Mammary epithelial cell (primary cell): ENCODE measurements at regions of chr3 and their contacts with region 1.

Region 1: DNA sequence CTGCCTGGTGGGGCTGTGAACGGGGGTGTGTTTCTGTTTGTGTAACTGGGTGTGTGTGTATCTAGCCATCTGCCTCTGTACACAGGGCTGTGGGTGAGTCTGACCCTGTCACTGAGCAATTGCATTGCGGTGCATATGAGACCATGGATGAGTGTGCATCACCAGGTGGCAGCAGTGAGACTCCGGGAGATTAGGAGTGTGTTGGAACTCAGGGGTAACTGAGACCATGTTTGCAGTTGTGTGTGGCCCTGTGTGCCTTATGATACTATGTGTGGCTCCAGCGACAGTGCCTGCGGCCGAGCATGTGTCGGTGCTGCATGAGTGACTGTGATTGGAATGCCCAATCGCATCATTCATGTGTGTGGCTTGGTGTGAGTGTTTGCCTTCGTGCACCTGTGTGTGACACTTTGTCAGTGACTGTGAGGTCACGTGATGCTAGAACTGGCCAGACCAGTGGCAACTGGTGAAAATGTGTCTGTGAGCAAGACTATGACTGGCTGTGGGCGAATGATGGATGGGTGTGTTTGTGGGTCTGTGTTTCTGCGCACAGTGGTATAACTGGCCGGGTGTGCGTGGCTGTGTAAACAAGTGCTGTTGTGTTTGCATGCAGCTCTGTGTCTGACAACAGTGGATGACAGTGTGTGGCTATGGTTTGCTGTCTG is 14.0 kb downstream of the VILL start:
- DNase-seq: peak; percentile 70
- H3K4me3 ChIP-seq: no peak overlapping the region
- H3K27ac ChIP-seq: no peak overlapping the region
- H3K4me1 ChIP-seq: peaks cover 25% of the 10 kb centered on the region
- H3K27me3 ChIP-seq: no peaks in the 10 kb centered on the region
- CTCF ChIP-seq: peak; percentile 84 to 89

Region 2: GRCh38 chr3:37768107-37768809 is 236.3 kb before region 1 on chr3:
- CTCF ChIA-PET with region 1: no interaction called
- dilution Hi-C with region 1: no loop called
- in situ Hi-C with region 1: no loop called
- intact Hi-C with region 1: no loop called
- DNase-seq: no peak
- H3K4me3 ChIP-seq: no peak overlapping the region
- H3K27ac ChIP-seq: no peak overlapping the region
- H3K4me1 ChIP-seq: no peaks in the 10 kb centered on the region
- H3K27me3 ChIP-seq: peaks cover 2% of the 10 kb centered on the region
- CTCF ChIP-seq: no peak

Region 3: GRCh38 chr3:37967260-37967881 is 37.2 kb before region 1 on chr3:
- CTCF ChIA-PET with region 1: no interaction called
- dilution Hi-C with region 1: loop called (anchors 5 kb)
- in situ Hi-C with region 1: no loop called
- intact Hi-C with region 1: no loop called
- DNase-seq: peak; percentile 45
- H3K4me3 ChIP-seq: no peak overlapping the region
- H3K27ac ChIP-seq: no peak overlapping the region
- H3K4me1 ChIP-seq: no peaks in the 10 kb centered on the region
- H3K27me3 ChIP-seq: no peaks in the 10 kb centered on the region
- CTCF ChIP-seq: peak; percentile 78 to 90

Region 4: DNA sequence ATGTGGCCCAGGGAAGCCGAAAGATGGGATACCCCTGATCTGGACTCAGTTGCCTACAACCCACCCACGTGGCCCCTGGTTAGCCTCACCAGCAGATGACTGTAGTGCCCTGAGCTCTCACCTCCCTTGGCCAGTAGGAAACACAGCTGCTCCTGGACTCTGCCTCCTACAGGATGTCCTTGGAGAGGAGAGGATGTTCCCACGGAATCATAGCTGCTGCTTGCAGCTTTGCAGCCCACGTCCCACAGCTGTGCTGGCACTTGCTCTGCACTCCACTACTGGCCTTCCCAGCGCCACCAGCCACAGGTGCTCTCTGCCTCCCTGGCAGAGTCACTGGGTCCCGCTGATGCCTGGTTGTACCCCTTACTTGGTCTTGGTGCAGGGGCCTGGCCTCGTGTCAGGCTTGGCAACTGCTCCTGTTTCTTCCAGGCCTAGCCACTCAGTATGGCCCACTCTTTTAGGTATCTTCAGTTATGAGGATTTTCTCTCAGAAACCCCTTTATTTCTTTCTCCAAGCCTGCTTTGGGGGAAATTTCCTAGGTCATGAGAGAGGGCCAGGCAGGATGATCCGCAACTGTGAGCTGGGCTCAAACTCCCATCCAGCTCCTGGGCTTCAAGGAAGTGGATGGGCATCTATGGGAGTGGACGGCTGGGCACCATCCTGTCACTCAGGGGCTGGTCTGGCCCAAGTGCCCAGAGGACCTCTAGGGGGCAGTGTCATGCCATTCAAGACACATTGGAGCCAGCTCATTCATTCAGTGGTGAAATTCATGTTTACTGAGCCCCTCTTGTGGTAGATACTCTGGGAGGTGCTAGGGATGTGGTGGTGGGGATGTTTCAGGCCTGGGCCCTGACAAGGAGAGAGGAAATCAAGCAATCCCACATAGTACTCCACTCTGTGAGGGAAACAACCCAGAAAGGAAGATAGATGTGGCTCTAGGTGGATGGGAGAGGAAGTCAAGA is 30.1 kb before region 1 on chr3:
- CTCF ChIA-PET with region 1: interaction called, 3 read pairs
- dilution Hi-C with region 1: no loop called
- in situ Hi-C with region 1: no loop called
- intact Hi-C with region 1: loop called (anchors 1 kb)
- DNase-seq: peak; percentile 30
- H3K4me3 ChIP-seq: no peak overlapping the region
- H3K27ac ChIP-seq: no peak overlapping the region
- H3K4me1 ChIP-seq: no peaks in the 10 kb centered on the region
- H3K27me3 ChIP-seq: no peaks in the 10 kb centered on the region
- CTCF ChIP-seq: peak; percentile 70 to 76

Region 5: GRCh38 chr3:38247366-38248035 is 243.0 kb after region 1 on chr3:
- CTCF ChIA-PET with region 1: interaction called, 3 read pairs
- dilution Hi-C with region 1: no loop called
- in situ Hi-C with region 1: no loop called
- intact Hi-C with region 1: loop called (anchors 1 kb)
- DNase-seq: peak; percentile 91
- H3K4me3 ChIP-seq: no peak overlapping the region
- H3K27ac ChIP-seq: peak overlapping the region; percentile 53
- H3K4me1 ChIP-seq: peaks cover 12% of the 10 kb centered on the region
- H3K27me3 ChIP-seq: no peaks in the 10 kb centered on the region
- CTCF ChIP-seq: peak; percentile 31 to 55